ENCODE measurements at regions of chr1 and their contacts with region 1.

Region 1: GRCh38 chr1:103106426-103107341 is 1.6 kb downstream of the COL11A1 start:
- DNase-seq: peak; percentile 6
- ATAC-seq: no peak
- H3K4me3 Mint-ChIP-seq: no peak overlapping the region
- H3K27ac Mint-ChIP-seq: no peak overlapping the region
- H3K4me1 Mint-ChIP-seq: peaks cover 7% of the 10 kb centered on the region
- H3K27me3 Mint-ChIP-seq: peaks cover 18% of the 10 kb centered on the region

Region 2: GRCh38 chr1:102842606-102843005 is 264.1 kb before region 1 on chr1:
- CTCF ChIA-PET with region 1: no interaction called
- POLR2A ChIA-PET with region 1: no interaction called
- intact Hi-C with region 1: no loop called
- DNase-seq: no peak
- ATAC-seq: no peak
- H3K4me3 Mint-ChIP-seq: no peak overlapping the region
- H3K27ac Mint-ChIP-seq: no peak overlapping the region
- H3K4me1 Mint-ChIP-seq: no peaks in the 10 kb centered on the region
- H3K27me3 Mint-ChIP-seq: no peaks in the 10 kb centered on the region

Region 3: DNA sequence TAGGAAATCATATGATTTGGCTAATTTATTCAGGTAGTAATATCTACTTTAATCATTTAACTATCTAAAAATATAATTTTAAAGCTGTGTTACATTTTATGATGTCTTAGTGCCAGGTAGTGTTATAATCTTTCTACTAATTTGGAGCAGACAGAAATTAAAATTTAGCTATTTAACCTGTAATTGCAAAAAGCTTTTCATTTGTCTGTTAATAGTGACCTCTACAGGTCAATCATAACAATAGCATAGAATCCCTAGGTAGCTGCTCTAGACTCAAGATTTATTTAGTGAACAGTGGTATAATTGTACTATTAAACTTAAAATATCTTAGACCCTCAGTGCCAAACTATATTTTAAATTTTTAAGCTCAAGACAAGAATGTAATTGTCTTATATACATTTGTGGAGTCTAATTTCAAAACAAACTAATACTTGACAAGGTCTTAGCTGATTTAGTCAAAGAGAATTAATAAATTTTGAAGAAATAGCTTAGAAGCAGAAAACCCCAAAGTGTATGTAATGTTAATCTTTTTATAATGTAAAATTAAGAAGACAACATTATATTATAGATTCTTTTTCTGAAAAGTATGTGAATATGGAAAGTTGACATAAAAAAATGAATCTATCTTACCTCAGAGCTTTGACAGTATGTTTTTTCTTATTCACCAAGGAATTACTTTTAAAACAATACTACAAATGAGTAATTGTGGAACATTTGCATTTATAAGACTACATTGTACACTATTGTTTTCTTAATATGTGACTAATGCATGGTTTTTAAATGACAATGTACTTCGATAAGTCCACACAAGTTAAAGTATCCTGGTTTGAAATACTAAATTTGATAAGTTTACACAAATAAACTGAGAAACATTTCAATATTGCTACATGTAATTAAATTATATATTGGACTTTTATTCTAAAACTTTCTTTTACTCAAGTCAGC is 354.7 kb after region 1 on chr1:
- CTCF ChIA-PET with region 1: interaction called, 5 read pairs
- POLR2A ChIA-PET with region 1: no interaction called
- intact Hi-C with region 1: loop called in 1 of 2 experiments (anchors 1 kb)
- DNase-seq: no peak
- ATAC-seq: no peak
- H3K4me3 Mint-ChIP-seq: no peak overlapping the region
- H3K27ac Mint-ChIP-seq: no peak overlapping the region
- H3K4me1 Mint-ChIP-seq: no peaks in the 10 kb centered on the region
- H3K27me3 Mint-ChIP-seq: peaks cover 3% of the 10 kb centered on the region

Measured in activated CD4-positive, alpha-beta T cell treated with anti-CD3 and anti-CD28 coated beads for 36 hours (primary cell).